Panc1 (cell line): ENCODE measurements at regions of chr19 and their contacts with region 1.

Region 1: GRCh38 chr19:40806488-40807468 is 7.8 kb downstream of the EGLN2 start:
- DNase-seq: no peak
- ATAC-seq: peak; percentile 40; the same call in 1 of the 2 replicates
- H3K4me3 ChIP-seq: no peak overlapping the region
- H3K27ac ChIP-seq: peak overlapping the region; percentile 17; the same call in 1 of the 2 replicates
- H3K4me1 ChIP-seq: peaks cover 49% of the 10 kb centered on the region
- H3K27me3 ChIP-seq: no peaks in the 10 kb centered on the region
- CTCF ChIP-seq: peak; percentile 86

Region 2: DNA sequence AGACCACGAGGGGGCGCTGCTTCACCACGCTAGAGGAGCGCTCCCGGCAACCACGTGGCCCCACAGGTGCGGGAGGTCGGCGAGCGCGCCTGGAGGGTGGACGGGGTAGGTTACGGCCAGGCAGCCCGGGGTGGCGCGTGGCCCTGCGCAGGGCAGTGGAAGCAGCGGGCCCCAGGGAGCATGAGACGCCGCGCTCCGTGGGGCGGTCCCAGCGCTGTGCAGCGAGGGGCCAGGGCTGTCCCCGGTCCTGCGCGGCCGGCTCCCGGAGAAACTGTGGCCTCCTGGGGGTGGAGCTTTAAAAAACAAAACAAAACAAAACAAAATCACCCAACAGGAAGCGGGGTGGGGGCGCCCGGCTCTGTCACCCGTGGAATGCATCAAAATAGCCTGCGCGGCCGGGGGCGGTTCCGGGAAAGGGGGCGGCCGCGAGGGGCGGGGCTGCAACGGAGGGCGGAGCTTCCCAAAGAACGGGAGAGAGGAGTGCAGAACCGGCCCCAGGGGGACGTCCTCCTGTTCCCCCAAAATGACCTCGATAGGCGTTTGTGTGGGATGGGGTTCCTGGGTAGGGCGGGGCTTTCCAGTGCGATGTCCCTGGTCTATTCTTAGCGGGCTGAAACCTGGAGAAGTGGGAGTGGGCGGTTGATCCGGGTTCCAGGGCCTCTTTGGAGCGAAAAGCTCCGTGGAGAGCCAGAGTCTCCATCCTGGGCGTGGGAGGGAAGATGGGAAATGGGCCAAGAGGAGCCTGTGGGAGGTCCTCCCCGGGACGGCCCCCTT is 143.7 kb before region 1 on chr19:
- CTCF ChIA-PET with region 1: no interaction called
- POLR2A ChIA-PET with region 1: no interaction called
- in situ Hi-C with region 1: no loop called
- intact Hi-C with region 1: loop called (anchors 10 kb)
- DNase-seq: no peak
- ATAC-seq: peak; percentile 91
- H3K4me3 ChIP-seq: peak overlapping the region; percentile 58 to 61
- H3K27ac ChIP-seq: 0 out of 2 replicates have a peak overlapping the region, but pooled peaks have one; percentile 29
- H3K4me1 ChIP-seq: peaks cover 12% of the 10 kb centered on the region
- H3K27me3 ChIP-seq: no peaks in the 10 kb centered on the region
- CTCF ChIP-seq: peak; percentile 92; the same call in 1 of the 2 replicates

Region 3: GRCh38 chr19:40777937-40778705 is 28.7 kb before region 1 on chr19 and contains the start of gene RAB4B:
- CTCF ChIA-PET with region 1: no interaction called
- POLR2A ChIA-PET with region 1: no interaction called
- in situ Hi-C with region 1: no loop called
- intact Hi-C with region 1: no loop called
- DNase-seq: peak; percentile 83
- ATAC-seq: peak; percentile 94
- H3K4me3 ChIP-seq: peak within 1 kb of the TSS; percentile 56 to 87
- H3K27ac ChIP-seq: peak within 1 kb of the TSS; percentile 90
- H3K4me1 ChIP-seq: peaks cover 6% of the 10 kb centered on the region; the same call in 1 of the 2 replicates
- H3K27me3 ChIP-seq: no peaks in the 10 kb centered on the region
- CTCF ChIP-seq: no peak
- total RNA-seq, gene RAB4B: 24.8 TPM